ENCODE measurements at regions of chr6 and their contacts with region 1.

Region 1: GRCh38 chr6:30238174-30238795 is 25.1 kb upstream of the TRIM26 start:
- DNase-seq: no peak
- H3K4me3 ChIP-seq: no peak overlapping the region
- H3K27ac ChIP-seq: no peak overlapping the region
- H3K4me1 ChIP-seq: no peaks in the 10 kb centered on the region
- H3K27me3 ChIP-seq: no peaks in the 10 kb centered on the region
- CTCF ChIP-seq: no peak

Region 2: GRCh38 chr6:30396833-30397479 is 158.7 kb after region 1 on chr6:
- intact Hi-C with region 1: loop called (anchors 10 kb)
- DNase-seq: peak; percentile 76 to 90 (median 80)
- H3K4me3 ChIP-seq: no peak overlapping the region
- H3K27ac ChIP-seq: no peak overlapping the region
- H3K4me1 ChIP-seq: no peaks in the 10 kb centered on the region
- H3K27me3 ChIP-seq: peaks cover 6% of the 10 kb centered on the region
- CTCF ChIP-seq: peak; percentile 83

Region 3: GRCh38 chr6:30717042-30717844 is 479.0 kb after region 1 on chr6 and contains the start of gene MDC1:
- intact Hi-C with region 1: no loop called
- DNase-seq: peak; percentile 99 to 100 (median 100)
- H3K4me3 ChIP-seq: peak within 1 kb of the TSS; percentile 71 to 99 (median 78)
- H3K27ac ChIP-seq: peak within 1 kb of the TSS; percentile 84 to 88
- H3K4me1 ChIP-seq: peaks cover 0 to 4% (median 4%) of the 10 kb centered on the region in 3 donors
- H3K27me3 ChIP-seq: no peaks in the 10 kb centered on the region
- CTCF ChIP-seq: peak; percentile 21
- total RNA-seq, gene MDC1: 47.9 TPM

Measured in kidney (tissue), 22 donors.